Activated naive CD8-positive, alpha-beta T cell treated with anti-CD3 and anti-CD28 coated beads, Interleukin-2, amount 10 ng/mL, durations not matched to agents 7 days and 5 days (primary cell): ENCODE measurements at regions of chr3 and their contacts with region 1.

Region 1: DNA sequence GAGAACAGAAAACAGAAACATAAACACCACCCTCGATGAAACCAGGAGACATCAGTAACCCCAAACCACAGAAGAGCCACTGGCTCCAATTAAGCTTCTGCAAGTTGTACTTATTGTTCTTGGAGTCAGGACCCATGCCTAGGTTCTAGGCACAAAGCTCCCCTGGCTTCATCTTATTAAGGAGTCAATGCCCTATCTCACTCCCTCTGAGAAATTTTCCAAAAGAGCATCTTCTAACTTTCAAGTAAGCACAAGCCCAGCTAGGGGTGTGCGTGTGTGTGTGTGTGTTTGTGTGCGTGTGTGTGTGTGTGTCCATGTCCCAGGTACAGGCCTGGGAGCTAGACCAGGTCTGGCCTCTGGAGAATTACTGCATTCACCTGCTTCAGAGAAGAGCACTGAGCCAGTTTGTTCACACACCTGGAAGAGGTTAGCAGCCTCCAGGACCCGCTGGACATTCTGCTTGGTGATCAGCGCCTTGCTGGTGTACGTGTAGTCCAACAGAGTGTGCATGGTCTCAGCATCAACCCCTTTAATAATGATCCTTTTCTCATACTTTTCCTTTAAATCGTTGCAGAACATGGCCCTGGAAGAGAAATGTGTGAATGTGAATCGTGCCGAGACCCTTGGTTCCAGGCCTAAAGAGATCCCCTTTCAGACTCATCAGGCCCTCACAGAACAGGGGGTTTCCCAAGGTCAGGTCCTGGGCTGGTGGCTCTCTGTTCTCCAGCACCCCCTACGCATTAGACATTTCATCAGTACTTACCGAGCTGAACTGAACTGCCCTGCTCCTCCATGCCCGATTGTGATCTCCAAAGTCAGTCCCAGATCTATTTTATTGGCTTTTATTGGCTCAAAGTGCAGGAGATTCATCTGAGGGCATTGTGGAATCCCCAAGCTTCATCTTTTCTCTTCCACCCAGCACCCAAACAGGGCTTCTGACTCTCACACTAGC is 27.8 kb downstream of the KLHL6 start:
- DNase-seq: no peak
- ATAC-seq: peak; percentile 87
- H3K4me3 Mint-ChIP-seq: peak overlapping the region; percentile 62
- H3K27ac Mint-ChIP-seq: peak overlapping the region; percentile 83
- H3K4me1 Mint-ChIP-seq: peaks cover 30% of the 10 kb centered on the region
- H3K27me3 Mint-ChIP-seq: no peaks in the 10 kb centered on the region

Region 2: GRCh38 chr3:183468424-183468823 is 59.3 kb before region 1 on chr3:
- POLR2A ChIA-PET with region 1: no interaction called
- DNase-seq: no peak
- ATAC-seq: no peak
- H3K4me3 Mint-ChIP-seq: no peak overlapping the region
- H3K27ac Mint-ChIP-seq: no peak overlapping the region
- H3K4me1 Mint-ChIP-seq: peaks cover 8% of the 10 kb centered on the region
- H3K27me3 Mint-ChIP-seq: peaks cover 5% of the 10 kb centered on the region

Region 3: GRCh38 chr3:183554377-183554776 is 26.7 kb after region 1 on chr3:
- POLR2A ChIA-PET with region 1: interaction called, 10 read pairs
- DNase-seq: no peak
- ATAC-seq: peak; percentile 31
- H3K4me3 Mint-ChIP-seq: peak overlapping the region; percentile 98
- H3K27ac Mint-ChIP-seq: peak overlapping the region; percentile 86
- H3K4me1 Mint-ChIP-seq: peaks cover 40% of the 10 kb centered on the region
- H3K27me3 Mint-ChIP-seq: no peaks in the 10 kb centered on the region